Transverse colon (tissue), 4 donors: ENCODE measurements at regions of chr12 and their contacts with region 1.

Region 1: DNA sequence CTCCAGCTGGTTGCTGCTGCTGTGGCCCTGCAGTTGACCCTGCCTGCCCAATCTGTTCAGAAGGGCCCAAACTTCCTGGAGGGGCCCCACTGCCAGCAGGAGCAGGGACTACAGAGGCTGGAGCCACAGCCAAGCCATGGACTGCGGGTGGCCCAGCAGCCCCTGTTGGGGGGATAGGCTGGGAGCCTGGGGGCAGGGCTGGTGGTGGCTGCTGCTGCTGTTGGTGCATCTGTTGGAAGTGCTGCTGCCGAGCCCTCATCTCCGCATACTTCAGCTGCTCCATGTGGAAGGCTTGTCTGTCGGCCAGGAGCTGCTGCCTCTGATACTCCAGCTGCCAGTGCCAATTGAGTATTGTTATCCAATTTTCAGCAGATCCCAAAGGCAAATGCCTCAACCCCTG is 7.2 kb downstream of the MYL6 start:
- DNase-seq: no peak
- H3K4me3 ChIP-seq: no peak overlapping the region
- H3K27ac ChIP-seq: peak overlapping the region in 1 of 4 donors; percentile 99
- H3K4me1 ChIP-seq: peaks cover 4 to 19% (median 18%) of the 10 kb centered on the region in 4 donors
- H3K27me3 ChIP-seq: no peaks in the 10 kb centered on the region
- CTCF ChIP-seq: no peak
- EP300 ChIP-seq: no peak
- POLR2A ChIP-seq: no peak

Region 2: GRCh38 chr12:56098592-56098991 is 66.8 kb before region 1 on chr12:
- in situ Hi-C with region 1: no loop called
- intact Hi-C with region 1: no loop called
- DNase-seq: no peak
- H3K4me3 ChIP-seq: no peak overlapping the region
- H3K27ac ChIP-seq: no peak overlapping the region
- H3K4me1 ChIP-seq: peaks cover 0 to 9% (median 5%) of the 10 kb centered on the region in 4 donors
- H3K27me3 ChIP-seq: no peaks in the 10 kb centered on the region
- CTCF ChIP-seq: no peak
- EP300 ChIP-seq: no peak
- POLR2A ChIP-seq: no peak

Region 3: DNA sequence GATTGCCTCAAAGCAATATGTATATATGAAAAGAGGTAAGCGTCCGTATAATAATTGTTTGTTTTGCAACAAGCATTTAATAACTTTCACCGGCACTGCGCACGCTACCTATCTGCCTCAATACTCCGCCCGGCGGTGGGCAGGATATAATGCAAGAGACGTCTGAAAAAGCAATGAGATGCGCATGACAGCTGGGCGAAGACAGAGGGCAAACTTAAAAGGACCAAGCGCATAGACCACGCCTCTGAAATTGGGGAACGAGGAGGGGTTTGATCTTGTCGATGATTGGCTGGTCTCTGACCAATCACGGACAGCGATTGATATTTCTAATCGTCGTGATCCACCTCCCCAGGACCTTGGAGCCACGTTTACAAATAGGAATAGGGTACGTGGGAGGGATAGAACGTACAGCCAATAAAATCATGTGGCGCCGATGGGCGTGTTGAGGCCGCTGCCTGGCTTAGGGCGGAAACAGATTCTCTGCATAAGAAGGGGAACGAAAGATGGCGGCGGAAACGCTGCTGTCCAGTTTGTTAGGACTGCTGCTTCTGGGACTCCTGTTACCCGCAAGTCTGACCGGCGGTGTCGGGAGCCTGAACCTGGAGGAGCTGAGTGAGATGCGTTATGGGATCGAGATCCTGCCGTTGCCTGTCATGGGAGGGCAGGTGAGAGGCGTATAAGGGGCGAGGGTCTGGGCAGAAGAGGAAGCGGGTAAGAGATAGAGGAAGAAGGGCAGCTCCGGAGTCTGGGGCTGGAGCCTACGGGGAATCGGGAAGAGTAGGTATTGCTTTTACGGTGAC is 1528.5 kb after region 1 on chr12 and contains the start of gene OS9:
- in situ Hi-C with region 1: no loop called
- intact Hi-C with region 1: loop called (anchors 5 kb)
- DNase-seq: peak; percentile 97
- H3K4me3 ChIP-seq: peak within 1 kb of the TSS; percentile 61 to 89 (median 82)
- H3K27ac ChIP-seq: peak within 1 kb of the TSS; percentile 73 to 88 (median 85)
- H3K4me1 ChIP-seq: peaks cover 0 to 16% (median 12%) of the 10 kb centered on the region in 4 donors
- H3K27me3 ChIP-seq: peaks cover 11% of the 10 kb centered on the region
- CTCF ChIP-seq: peak; percentile 73 to 93 (median 79)
- EP300 ChIP-seq: no peak
- POLR2A ChIP-seq: peak; percentile 92
- total RNA-seq, gene OS9: 187 to 362 (median 249) TPM